Mammary epithelial cell (primary cell): ENCODE measurements at regions of chr4 and their contacts with region 1.

Region 1: GRCh38 chr4:159608437-159608836 is 505.6 kb downstream of the RAPGEF2 start:
- DNase-seq: peak; percentile 59
- H3K4me3 ChIP-seq: no peak overlapping the region
- H3K27ac ChIP-seq: no peak overlapping the region
- H3K4me1 ChIP-seq: peaks cover 21% of the 10 kb centered on the region
- H3K27me3 ChIP-seq: no peaks in the 10 kb centered on the region
- CTCF ChIP-seq: peak; percentile 37 to 49

Region 2: GRCh38 chr4:158314756-158315487 is 1293.5 kb before region 1 on chr4:
- CTCF ChIA-PET with region 1: no interaction called
- dilution Hi-C with region 1: no loop called
- in situ Hi-C with region 1: no loop called
- intact Hi-C with region 1: no loop called
- DNase-seq: peak; percentile 86
- H3K4me3 ChIP-seq: no peak overlapping the region
- H3K27ac ChIP-seq: peak overlapping the region; percentile 78
- H3K4me1 ChIP-seq: peaks cover 23% of the 10 kb centered on the region
- H3K27me3 ChIP-seq: no peaks in the 10 kb centered on the region
- CTCF ChIP-seq: no peak

Region 3: GRCh38 chr4:159487284-159487747 is 121.1 kb before region 1 on chr4:
- CTCF ChIA-PET with region 1: interaction called, 3 read pairs
- dilution Hi-C with region 1: no loop called
- in situ Hi-C with region 1: no loop called
- intact Hi-C with region 1: loop called (anchors 2 kb)
- DNase-seq: peak; percentile 61
- H3K4me3 ChIP-seq: no peak overlapping the region
- H3K27ac ChIP-seq: no peak overlapping the region
- H3K4me1 ChIP-seq: no peaks in the 10 kb centered on the region
- H3K27me3 ChIP-seq: no peaks in the 10 kb centered on the region
- CTCF ChIP-seq: peak; percentile 80 to 82

Region 4: GRCh38 chr4:159534655-159535054 is 73.8 kb before region 1 on chr4:
- CTCF ChIA-PET with region 1: no interaction called
- dilution Hi-C with region 1: loop called (anchors 5 kb)
- in situ Hi-C with region 1: no loop called
- intact Hi-C with region 1: no loop called
- DNase-seq: no peak
- H3K4me3 ChIP-seq: no peak overlapping the region
- H3K27ac ChIP-seq: no peak overlapping the region
- H3K4me1 ChIP-seq: no peaks in the 10 kb centered on the region
- H3K27me3 ChIP-seq: peaks cover 7% of the 10 kb centered on the region
- CTCF ChIP-seq: no peak

Region 5: DNA sequence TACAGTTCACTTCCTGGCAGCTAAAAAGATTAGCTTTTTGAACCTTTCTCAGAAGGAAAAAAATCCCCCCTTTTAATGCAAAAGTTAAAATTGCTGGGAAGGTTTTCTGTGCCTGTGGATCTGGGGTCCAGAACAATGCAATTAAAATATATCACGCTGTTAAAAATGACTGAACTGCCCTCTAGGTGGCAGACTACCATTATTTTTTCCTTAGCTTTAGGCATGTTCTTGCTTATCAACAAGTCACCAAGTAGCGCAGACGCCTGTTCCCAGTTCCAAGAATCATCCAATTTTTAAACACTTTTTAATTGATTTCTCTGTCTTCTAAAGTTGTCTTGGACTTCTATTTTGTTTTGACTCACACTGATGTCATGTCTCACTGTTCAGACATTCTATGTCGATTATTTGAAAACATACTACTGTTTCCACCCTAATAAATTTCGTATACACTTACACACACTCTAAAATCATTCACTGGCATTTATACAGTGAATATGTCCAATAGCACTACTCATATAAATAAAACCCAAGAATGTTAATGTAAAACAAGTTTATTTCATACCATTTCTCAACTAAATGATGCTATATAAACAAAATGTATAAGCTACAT is 156.0 kb after region 1 on chr4:
- CTCF ChIA-PET with region 1: no interaction called
- dilution Hi-C with region 1: no loop called
- in situ Hi-C with region 1: no loop called
- intact Hi-C with region 1: loop called (anchors 5 kb)
- DNase-seq: peak; percentile 60
- H3K4me3 ChIP-seq: no peak overlapping the region
- H3K27ac ChIP-seq: no peak overlapping the region
- H3K4me1 ChIP-seq: no peaks in the 10 kb centered on the region
- H3K27me3 ChIP-seq: no peaks in the 10 kb centered on the region
- CTCF ChIP-seq: peak; percentile 53 to 59

Region 6: GRCh38 chr4:159946983-159947615 is 338.7 kb after region 1 on chr4:
- CTCF ChIA-PET with region 1: no interaction called
- dilution Hi-C with region 1: no loop called
- in situ Hi-C with region 1: no loop called
- intact Hi-C with region 1: loop called (anchors 2 kb)
- DNase-seq: peak; percentile 62
- H3K4me3 ChIP-seq: no peak overlapping the region
- H3K27ac ChIP-seq: no peak overlapping the region
- H3K4me1 ChIP-seq: no peaks in the 10 kb centered on the region
- H3K27me3 ChIP-seq: no peaks in the 10 kb centered on the region
- CTCF ChIP-seq: peak; percentile 75 to 79

Region 7: GRCh38 chr4:160175064-160175645 is 566.7 kb after region 1 on chr4:
- CTCF ChIA-PET with region 1: no interaction called
- dilution Hi-C with region 1: no loop called
- in situ Hi-C with region 1: no loop called
- intact Hi-C with region 1: loop called (anchors 5 kb)
- DNase-seq: peak; percentile 6
- H3K4me3 ChIP-seq: no peak overlapping the region
- H3K27ac ChIP-seq: no peak overlapping the region
- H3K4me1 ChIP-seq: peaks cover 3% of the 10 kb centered on the region
- H3K27me3 ChIP-seq: no peaks in the 10 kb centered on the region
- CTCF ChIP-seq: peak; percentile 5 to 47